H1 (cell line): ENCODE measurements at regions of chr4 and their contacts with region 1.

Region 1: GRCh38 chr4:185096032-185096653 is 46.9 kb upstream of the SLC25A4 start:
- DNase-seq: no peak
- H3K4me3 ChIP-seq: no peak overlapping the region
- H3K27ac ChIP-seq: no peak overlapping the region
- H3K4me1 ChIP-seq: peaks cover 0 to 4% (median 0%) of the 10 kb centered on the region in 4 experiments; a peak in 1 of 7 replicates
- H3K27me3 ChIP-seq: no peaks in the 10 kb centered on the region
- CTCF ChIP-seq: peak in 2 of 3 experiments; percentile 50 to 56; a peak in 2 of 4 replicates
- EP300 ChIP-seq: no peak
- POLR2A ChIP-seq: no peak
- RAD21 ChIP-seq: peak; percentile 80 to 82

Region 2: GRCh38 chr4:185020293-185020808 is 75.8 kb before region 1 on chr4:
- CTCF ChIA-PET with region 1: interaction called, 21 read pairs
- POLR2A ChIA-PET with region 1: interaction called, 4 read pairs
- DNase-seq: peak in 1 of 2 experiments; percentile 83
- H3K4me3 ChIP-seq: peak overlapping the region; percentile 2 to 53 (median 28); a peak in 7 of 8 replicates
- H3K27ac ChIP-seq: no peak overlapping the region
- H3K4me1 ChIP-seq: peaks cover 0 to 52% (median 29%) of the 10 kb centered on the region in 4 experiments; a peak in 6 of 7 replicates
- H3K27me3 ChIP-seq: peaks cover 95 to 100% (median 100%) of the 10 kb centered on the region in 4 experiments
- CTCF ChIP-seq: no peak
- EP300 ChIP-seq: no peak
- POLR2A ChIP-seq: no peak
- RAD21 ChIP-seq: no peak

Region 3: DNA sequence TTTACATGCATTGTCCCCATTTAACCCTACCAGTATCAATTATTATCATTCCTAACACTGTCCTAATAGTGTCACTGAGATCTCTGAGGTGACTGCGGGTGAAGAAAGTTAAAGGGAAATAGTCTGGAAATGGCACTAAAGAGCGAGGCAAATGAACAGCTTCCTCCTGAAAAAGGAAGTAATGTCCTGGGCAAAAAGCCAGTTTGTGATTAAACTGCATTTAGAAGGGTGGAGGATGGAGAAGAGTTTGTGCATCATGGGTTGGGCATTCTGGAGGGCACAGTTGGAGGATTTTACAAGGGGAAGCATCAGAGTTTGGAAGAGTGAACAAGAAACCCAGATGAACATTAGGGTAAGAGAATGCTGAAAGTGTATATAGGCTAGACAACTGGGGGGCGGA is 13.6 kb before region 1 on chr4:
- CTCF ChIA-PET with region 1: interaction called, 56 read pairs
- POLR2A ChIA-PET with region 1: no interaction called
- DNase-seq: no peak
- H3K4me3 ChIP-seq: no peak overlapping the region
- H3K27ac ChIP-seq: no peak overlapping the region
- H3K4me1 ChIP-seq: peaks cover 2 to 39% (median 9%) of the 10 kb centered on the region in 4 experiments; a peak in 6 of 7 replicates
- H3K27me3 ChIP-seq: no peaks in the 10 kb centered on the region
- CTCF ChIP-seq: no peak
- EP300 ChIP-seq: no peak
- POLR2A ChIP-seq: no peak
- RAD21 ChIP-seq: no peak

Region 4: DNA sequence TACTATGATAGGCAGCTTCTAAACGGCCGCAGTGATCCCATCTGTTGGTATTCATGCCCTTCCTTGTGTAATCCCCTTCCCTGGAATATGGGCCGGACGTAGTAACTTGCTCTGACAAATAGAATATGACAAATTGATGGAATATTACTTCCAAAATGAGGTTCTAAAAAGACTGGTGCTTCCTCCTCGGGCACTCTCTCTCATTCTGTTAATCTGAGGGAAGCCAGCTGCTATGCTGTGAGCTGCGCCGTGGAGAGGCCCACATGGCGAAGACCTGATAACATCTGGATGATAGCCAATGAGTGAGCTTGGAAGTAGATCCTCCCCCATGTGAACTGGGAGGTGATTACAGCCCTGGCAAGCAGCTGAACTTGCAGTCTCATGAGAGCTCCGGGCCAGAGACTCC is 19.7 kb after region 1 on chr4:
- CTCF ChIA-PET with region 1: interaction called, 16 read pairs
- POLR2A ChIA-PET with region 1: interaction called, 4 read pairs
- DNase-seq: peak in 1 of 2 experiments; percentile 52
- H3K4me3 ChIP-seq: no peak overlapping the region
- H3K27ac ChIP-seq: no peak overlapping the region
- H3K4me1 ChIP-seq: peaks cover 0 to 9% (median 7%) of the 10 kb centered on the region in 4 experiments; a peak in 5 of 7 replicates
- H3K27me3 ChIP-seq: no peaks in the 10 kb centered on the region
- CTCF ChIP-seq: no peak
- EP300 ChIP-seq: no peak
- POLR2A ChIP-seq: peak in 1 of 2 experiments; percentile 47; a peak in 2 of 3 replicates
- RAD21 ChIP-seq: 0 out of 4 replicates have a peak, but pooled peaks of 1 of the 2 experiments have one; percentile 1